ENCODE measurements at regions of chr4 and their contacts with region 1.

Region 1: DNA sequence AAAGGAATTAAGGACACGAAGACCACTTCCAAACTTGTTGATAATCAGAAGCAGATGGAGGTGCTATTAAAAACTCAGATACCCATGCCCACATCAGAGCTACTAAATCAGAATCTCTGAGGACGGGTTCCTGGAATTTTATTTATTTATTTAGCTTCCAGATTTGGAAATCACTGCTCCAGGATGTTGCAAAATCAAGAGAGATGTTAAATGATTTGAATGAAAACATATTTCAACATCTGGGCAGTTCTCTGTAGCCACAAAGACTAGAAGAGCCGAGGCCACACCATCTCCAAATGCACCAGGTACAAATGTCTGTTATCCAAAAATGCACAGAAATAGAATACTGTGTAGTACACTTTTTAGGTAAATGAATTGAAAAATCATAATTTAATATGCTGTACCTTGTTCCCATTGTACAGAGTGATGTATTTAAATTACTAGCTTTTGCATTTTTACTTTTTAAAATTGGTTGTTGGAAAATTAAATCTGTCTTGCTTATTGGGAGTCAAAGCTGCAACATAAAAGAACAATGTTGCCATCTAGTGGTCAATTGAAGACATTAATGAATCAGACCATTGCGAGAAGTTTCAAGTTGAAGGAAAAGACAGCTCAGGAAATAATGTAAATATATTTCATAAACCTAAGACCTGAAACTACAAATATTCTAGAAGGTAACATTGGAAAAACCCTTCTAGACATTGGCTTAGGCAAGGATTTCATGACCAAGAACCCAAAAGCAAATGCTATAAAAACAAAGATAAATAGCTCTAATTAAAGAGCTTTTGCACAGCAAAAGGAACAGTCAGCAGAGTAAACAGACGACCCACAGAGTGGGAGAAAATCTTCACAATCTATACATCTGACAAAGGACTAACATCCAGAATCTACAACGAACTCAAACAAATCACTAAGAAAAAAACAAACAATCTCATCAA is 151.3 kb upstream of the TTC29 start:
- DNase-seq: no peak
- ATAC-seq: no peak
- H3K4me3 Mint-ChIP-seq: no peak overlapping the region
- H3K27ac Mint-ChIP-seq: no peak overlapping the region
- H3K4me1 Mint-ChIP-seq: no peaks in the 10 kb centered on the region
- H3K27me3 Mint-ChIP-seq: peaks cover 14% of the 10 kb centered on the region
- CTCF ChIP-seq: peak; percentile 63

Region 2: DNA sequence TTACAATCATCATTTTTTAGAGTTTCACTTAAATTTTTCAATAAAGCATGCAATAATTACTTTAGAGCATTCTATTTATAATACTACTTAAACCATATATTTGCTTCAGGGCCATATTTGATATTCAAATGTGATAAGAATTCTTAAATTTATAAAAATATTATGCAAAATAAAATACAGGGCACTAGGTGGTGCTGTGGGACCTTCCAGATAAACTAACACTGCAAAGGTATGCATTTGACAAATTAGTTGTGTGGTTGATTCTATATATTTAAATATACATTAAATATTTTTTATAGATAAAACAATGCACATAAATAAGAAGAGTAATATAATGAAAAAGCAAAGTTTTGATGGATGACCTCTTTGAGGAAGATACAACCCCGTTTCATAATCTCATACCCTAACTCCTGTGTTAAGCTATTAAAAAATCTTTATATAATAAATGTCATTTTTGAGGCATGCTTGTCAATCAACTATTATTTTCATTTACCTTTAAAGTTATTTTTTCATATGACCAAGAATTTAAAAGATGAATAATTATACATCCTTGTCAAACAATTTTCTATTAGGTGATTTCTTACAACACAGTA is 754.2 kb before region 1 on chr4:
- CTCF ChIA-PET with region 1: interaction called, 9 read pairs
- POLR2A ChIA-PET with region 1: no interaction called
- intact Hi-C with region 1: loop called (anchors 5 kb)
- DNase-seq: peak; percentile 60
- ATAC-seq: no peak
- H3K4me3 Mint-ChIP-seq: no peak overlapping the region
- H3K27ac Mint-ChIP-seq: no peak overlapping the region
- H3K4me1 Mint-ChIP-seq: peaks cover 14% of the 10 kb centered on the region
- H3K27me3 Mint-ChIP-seq: no peaks in the 10 kb centered on the region
- CTCF ChIP-seq: peak; percentile 88

Region 3: GRCh38 chr4:147006229-147006628 is 90.7 kb before region 1 on chr4:
- CTCF ChIA-PET with region 1: interaction called, 11 read pairs
- POLR2A ChIA-PET with region 1: no interaction called
- intact Hi-C with region 1: no loop called
- DNase-seq: no peak
- ATAC-seq: no peak
- H3K4me3 Mint-ChIP-seq: no peak overlapping the region
- H3K27ac Mint-ChIP-seq: no peak overlapping the region
- H3K4me1 Mint-ChIP-seq: no peaks in the 10 kb centered on the region
- H3K27me3 Mint-ChIP-seq: peaks cover 2% of the 10 kb centered on the region
- CTCF ChIP-seq: no peak

Region 4: DNA sequence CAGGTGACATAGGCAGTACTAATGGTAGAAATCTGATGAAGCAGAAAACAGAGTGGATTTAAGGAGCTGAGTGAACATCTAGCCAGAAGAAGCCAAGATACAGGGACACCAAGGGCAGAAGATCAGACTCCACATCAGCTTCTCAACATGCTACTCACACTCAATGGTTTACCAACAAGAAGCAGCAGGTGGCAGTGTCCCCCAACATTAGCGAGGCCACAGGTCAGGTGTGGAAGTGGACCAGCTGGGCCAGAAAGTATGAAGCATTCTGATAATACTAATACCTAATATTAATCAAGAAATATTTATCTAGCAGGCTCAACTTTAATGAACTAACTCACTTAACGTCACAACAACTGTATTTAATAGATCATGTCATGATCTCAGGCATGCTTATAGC is 77.9 kb before region 1 on chr4:
- CTCF ChIA-PET with region 1: interaction called, 120 read pairs
- POLR2A ChIA-PET with region 1: no interaction called
- intact Hi-C with region 1: loop called (anchors 1 kb)
- DNase-seq: peak; percentile 72
- ATAC-seq: peak; percentile 56
- H3K4me3 Mint-ChIP-seq: no peak overlapping the region
- H3K27ac Mint-ChIP-seq: no peak overlapping the region
- H3K4me1 Mint-ChIP-seq: no peaks in the 10 kb centered on the region
- H3K27me3 Mint-ChIP-seq: no peaks in the 10 kb centered on the region
- CTCF ChIP-seq: peak; percentile 66

Region 5: DNA sequence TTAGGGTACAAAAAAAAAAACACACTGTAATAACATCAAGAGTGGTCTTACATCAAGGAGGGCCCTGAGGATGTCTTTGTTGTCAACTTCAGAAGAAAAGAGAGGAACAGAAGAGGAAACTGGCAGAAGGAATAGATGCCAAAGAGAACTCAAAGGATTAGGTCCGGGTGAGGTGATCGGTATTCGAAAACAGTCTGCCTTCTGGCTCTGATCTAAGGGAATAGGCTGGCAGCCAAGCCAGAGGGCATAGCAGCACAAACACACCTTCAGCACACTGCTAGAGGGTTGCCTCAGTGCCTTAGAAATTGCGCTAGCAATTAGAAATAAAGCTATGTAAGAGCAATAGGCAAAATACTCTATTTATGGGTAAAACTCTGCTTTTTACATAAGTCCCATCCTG is 59.9 kb before region 1 on chr4:
- CTCF ChIA-PET with region 1: interaction called, 10 read pairs
- POLR2A ChIA-PET with region 1: no interaction called
- intact Hi-C with region 1: no loop called
- DNase-seq: no peak
- ATAC-seq: no peak
- H3K4me3 Mint-ChIP-seq: no peak overlapping the region
- H3K27ac Mint-ChIP-seq: no peak overlapping the region
- H3K4me1 Mint-ChIP-seq: no peaks in the 10 kb centered on the region
- H3K27me3 Mint-ChIP-seq: peaks cover 13% of the 10 kb centered on the region
- CTCF ChIP-seq: no peak

Region 6: DNA sequence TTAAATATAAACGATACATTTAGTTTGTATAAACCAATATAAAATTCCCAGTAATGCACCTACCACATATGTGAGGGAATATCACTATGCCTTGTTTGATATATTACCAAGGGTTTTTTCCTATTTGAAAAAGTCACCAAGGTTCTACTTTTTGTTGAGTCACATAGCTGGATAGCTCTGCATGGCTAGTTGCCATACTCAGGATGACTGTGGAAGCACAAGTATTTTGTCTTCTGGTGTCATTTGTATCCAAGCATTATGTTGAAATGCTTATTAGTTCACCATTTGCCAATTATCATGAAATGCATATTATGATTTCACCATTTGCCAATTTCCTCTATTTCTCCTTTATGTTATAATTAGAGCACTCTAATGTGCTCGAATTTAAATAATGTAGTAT is 11.5 kb after region 1 on chr4:
- CTCF ChIA-PET with region 1: interaction called, 20 read pairs
- POLR2A ChIA-PET with region 1: no interaction called
- intact Hi-C with region 1: no loop called
- DNase-seq: no peak
- ATAC-seq: no peak
- H3K4me3 Mint-ChIP-seq: no peak overlapping the region
- H3K27ac Mint-ChIP-seq: no peak overlapping the region
- H3K4me1 Mint-ChIP-seq: no peaks in the 10 kb centered on the region
- H3K27me3 Mint-ChIP-seq: no peaks in the 10 kb centered on the region
- CTCF ChIP-seq: no peak

Measured in activated CD8-positive, alpha-beta T cell treated with anti-CD3 and anti-CD28 coated beads for 36 hours (primary cell).